Posterior vena cava (tissue), 2 donors: ENCODE measurements at regions of chr12 and their contacts with region 1.

Region 1: DNA sequence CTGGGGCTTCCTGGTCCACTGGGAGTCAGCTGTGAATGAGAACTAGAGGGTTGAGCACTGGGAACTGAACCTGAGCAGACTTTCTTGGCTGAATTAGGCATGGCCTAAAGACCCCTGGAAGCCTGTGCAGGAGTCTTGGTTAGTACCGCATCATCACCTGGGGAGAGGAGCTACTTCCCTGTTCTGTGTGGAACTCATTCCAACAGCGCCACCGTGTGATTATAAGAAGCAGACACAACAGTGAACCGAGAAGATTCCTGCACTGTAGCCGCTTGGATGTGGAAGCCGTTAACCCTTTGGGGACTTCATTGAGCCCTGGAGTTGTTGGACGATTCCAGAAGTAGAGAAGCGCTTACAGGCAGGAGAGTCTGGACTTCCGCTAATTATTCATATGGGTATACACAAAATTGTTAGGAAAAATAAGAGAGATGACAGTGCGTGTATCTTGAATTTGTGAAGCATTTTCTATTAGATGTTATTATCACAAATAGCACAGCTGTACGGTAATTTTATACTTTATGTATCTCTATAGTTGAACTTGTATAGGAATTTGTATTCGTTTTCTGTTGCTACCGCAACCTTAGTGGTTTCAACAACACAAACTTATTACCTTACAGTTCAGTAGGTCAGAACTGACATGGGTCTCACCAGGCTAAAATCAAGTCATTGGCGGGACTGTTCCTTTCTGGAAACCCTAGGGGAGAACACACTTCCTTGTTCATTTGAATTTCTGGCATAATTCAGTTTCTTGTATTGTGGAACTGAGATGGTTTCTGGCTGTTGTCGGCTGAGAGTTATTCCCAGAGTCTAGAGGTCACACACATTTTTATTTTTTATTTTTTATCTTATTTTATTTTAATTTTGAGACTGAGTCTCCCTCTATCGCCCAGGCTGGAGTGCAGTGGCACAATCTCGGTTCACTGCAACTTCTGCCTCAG is 100.7 kb downstream of the C2CD5 start:
- DNase-seq: peak; percentile 66

Region 2: GRCh38 chr12:22083167-22083566 is 360.5 kb before region 1 on chr12:
- intact Hi-C with region 1: loop called (anchors 5 to 10 kb)
- DNase-seq: no peak

Region 3: DNA sequence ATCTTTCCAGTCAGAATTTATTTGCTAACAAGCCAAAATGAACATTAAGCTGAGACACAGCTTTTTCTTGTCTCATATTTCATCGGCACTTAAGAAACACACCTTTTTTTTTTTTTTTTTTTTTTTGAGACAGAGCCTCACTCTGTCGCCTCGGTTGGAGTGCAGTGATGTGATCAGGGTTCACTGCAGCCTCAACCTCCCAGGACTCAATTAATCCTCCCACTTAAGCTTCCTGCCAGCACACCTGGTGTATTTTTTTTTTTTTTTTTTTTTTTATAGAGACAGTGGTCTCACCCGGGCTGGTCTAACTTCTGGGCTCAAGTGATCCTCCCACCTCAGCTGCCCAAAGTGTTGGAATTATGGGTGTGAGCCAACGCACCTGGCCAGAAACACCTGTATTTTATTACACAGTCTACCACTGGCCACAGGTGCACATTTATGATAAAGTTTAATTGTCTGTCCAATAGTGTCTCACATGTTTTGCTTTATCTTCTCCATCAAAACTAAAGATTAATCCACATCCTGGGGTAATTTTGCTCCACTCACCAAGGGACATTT is 38.0 kb after region 1 on chr12:
- intact Hi-C with region 1: no loop called
- DNase-seq: no peak